Prostate gland (tissue), 2 donors: ENCODE measurements at regions of chr19 and their contacts with region 1.

Region 1: DNA sequence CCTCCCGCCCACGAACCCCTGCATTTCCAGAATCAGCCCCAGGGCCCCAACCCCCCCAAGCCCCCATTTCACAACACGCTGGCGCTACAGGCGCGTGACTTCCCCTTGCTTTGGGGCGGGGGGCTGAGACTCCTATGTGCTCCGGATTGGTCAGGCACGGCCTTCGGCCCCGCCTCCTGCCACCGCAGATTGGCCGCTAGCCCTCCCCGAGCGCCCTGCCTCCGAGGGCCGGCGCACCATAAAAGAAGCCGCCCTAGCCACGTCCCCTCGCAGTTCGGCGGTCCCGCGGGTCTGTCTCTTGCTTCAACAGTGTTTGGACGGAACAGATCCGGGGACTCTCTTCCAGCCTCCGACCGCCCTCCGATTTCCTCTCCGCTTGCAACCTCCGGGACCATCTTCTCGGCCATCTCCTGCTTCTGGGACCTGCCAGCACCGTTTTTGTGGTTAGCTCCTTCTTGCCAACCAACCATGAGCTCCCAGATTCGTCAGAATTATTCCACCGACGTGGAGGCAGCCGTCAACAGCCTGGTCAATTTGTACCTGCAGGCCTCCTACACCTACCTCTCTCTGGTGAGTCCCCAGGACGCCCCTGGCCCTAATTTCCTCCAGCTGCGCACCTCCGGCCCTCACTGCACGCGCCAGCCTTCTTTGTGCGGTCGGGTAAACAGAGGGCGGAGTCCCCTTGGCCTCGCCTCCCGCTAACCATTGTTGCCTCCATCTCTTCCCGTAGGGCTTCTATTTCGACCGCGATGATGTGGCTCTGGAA is at the start of gene FTL:
- DNase-seq: peak; percentile 97
- H3K4me3 ChIP-seq: peak within 1 kb of the TSS; percentile 69 to 86
- H3K27ac ChIP-seq: peak within 1 kb of the TSS; percentile 93 to 95
- H3K4me1 ChIP-seq: peaks cover 7% of the 10 kb centered on the region
- H3K27me3 ChIP-seq: no peaks in the 10 kb centered on the region
- CTCF ChIP-seq: peak in 2 of 4 experiments; percentile 19 to 20
- POLR2A ChIP-seq: peak; percentile 100
- total RNA-seq, gene FTL: 1,764 to 2,124 TPM

Region 2: GRCh38 chr19:48872182-48872883 is 92.9 kb before region 1 on chr19 and contains the start of gene PPP1R15A:
- intact Hi-C with region 1: loop called (anchors 2 kb)
- DNase-seq: peak; percentile 98
- H3K4me3 ChIP-seq: peak within 1 kb of the TSS; percentile 78 to 90
- H3K27ac ChIP-seq: peak within 1 kb of the TSS; percentile 100
- H3K4me1 ChIP-seq: peaks cover 19% of the 10 kb centered on the region
- H3K27me3 ChIP-seq: no peaks in the 10 kb centered on the region
- CTCF ChIP-seq: peak in 3 of 4 experiments; percentile 15 to 83 (median 60)
- POLR2A ChIP-seq: peak; percentile 100
- total RNA-seq, gene PPP1R15A: 35.1 to 49.0 TPM

Region 3: DNA sequence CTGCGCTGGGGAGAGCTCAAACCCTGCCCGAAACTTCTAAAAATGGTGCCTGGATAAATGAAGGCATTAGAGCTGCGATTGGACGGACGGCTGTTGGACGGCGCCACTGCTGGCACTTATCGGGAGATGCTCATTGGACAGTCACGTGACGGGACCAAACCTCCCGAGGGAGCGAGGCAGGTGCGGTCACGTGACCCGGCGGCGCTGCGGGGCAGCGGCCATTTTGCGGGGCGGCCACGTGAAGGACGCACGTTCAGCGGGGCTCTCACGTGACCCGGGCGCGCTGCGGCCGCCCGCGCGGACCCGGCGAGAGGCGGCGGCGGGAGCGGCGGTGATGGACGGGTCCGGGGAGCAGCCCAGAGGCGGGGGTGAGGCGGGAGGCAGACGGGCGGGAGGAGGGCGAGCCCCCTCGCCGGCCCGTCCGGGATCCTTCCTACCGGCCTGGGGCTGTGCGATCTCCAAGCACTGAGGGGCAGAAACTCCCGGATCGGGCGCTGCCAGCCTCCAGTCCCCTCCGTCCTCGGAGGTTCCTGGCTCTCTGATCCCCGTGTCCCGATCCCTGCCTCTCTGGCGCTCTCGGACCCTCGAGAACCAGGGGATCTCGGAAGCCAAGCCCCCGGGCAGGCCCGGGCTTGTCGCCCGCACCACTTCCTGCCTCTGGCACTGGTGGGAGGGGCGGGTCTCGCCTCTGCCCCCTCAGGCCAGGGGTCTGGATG is 10.5 kb before region 1 on chr19 and contains the start of gene BAX:
- intact Hi-C with region 1: no loop called
- DNase-seq: peak; percentile 95
- H3K4me3 ChIP-seq: peak within 1 kb of the TSS; percentile 79 to 93
- H3K27ac ChIP-seq: peak within 1 kb of the TSS; percentile 77 to 81
- H3K4me1 ChIP-seq: no peaks in the 10 kb centered on the region
- H3K27me3 ChIP-seq: no peaks in the 10 kb centered on the region
- CTCF ChIP-seq: peak in 2 of 4 experiments; percentile 33 to 38
- POLR2A ChIP-seq: peak; percentile 83
- total RNA-seq, gene BAX: 52.1 to 62.3 TPM

Region 4: GRCh38 chr19:49014123-49014869 is 49.1 kb after region 1 on chr19:
- intact Hi-C with region 1: no loop called
- DNase-seq: no peak
- H3K4me3 ChIP-seq: no peak overlapping the region
- H3K27ac ChIP-seq: no peak overlapping the region
- H3K4me1 ChIP-seq: no peaks in the 10 kb centered on the region
- H3K27me3 ChIP-seq: no peaks in the 10 kb centered on the region
- CTCF ChIP-seq: no peak
- POLR2A ChIP-seq: no peak